GM10248 (cell line): ENCODE measurements at regions of chr11 and their contacts with region 1.

Region 1: GRCh38 chr11:92941676-92942571 is 27.5 kb upstream of the MTNR1B start:
- DNase-seq: peak; percentile 56
- CTCF ChIP-seq: peak; percentile 57

Region 2: DNA sequence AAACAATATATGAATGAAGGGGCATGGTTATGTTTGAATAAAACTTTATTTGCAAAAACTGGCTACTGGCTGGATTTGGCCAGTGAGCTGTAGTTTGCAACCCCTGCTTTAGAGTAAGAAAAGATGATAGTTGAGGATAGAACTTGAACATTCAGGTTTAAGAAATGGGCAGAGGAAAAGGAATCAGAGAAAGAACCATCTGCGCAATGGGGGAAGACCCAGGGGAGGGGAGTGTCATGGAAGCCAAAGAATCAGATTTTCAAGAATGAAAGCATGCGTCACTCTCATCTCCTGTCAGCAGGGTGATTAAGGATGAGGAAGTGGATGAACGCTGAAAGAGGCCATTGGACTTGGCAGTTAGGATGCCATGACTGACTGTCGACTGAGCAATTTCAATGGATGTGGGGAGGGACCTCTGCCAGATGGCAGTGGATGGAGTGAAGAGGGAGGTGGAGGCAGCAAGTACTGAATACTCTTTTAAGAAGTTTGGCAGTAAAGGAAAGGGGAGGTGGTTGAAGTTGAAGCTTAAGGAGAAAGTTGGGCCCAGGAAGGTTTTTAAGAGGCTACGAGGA is 696.1 kb before region 1 on chr11:
- CTCF ChIA-PET with region 1: no interaction called
- POLR2A ChIA-PET with region 1: no interaction called
- DNase-seq: no peak
- CTCF ChIP-seq: no peak

Region 3: DNA sequence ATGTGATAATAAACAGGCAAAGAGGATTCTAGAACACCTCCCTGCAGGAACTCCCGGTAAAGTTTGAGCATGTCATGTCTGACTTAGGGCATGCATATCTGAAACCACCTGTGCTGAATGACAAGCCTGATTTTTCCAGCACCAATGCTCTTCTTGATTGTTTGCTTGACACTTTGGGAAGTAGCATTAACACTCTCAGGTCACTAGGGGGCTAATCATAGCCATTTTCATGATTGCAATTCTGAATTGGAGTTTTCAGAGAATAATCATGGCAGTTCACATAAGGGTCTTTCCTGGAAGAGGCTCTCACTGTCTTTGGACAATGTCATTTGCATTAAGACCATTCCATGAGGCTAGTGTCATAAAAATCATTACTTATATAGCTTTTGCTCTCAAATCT is 206.9 kb before region 1 on chr11:
- CTCF ChIA-PET with region 1: no interaction called
- POLR2A ChIA-PET with region 1: no interaction called
- DNase-seq: no peak
- CTCF ChIP-seq: no peak

Region 4: DNA sequence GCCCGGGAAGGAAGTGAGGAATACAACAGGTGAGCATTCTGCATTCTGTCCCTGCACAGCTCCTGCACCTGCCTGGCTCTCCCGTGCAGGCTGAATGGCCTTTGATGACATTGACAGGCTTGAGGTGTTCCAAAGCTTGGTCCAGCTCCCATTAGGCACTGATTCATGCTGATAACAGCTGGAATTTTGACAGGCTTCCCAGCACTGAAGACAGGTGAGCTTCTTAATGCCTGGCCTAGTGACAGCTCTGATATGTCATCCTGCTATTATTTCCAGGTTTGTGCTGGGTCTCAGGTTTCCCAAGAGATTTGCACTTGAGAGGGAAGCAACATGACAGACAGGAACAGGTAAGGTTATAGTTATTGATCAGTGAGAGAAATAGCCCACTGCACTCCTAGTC is 30.4 kb before region 1 on chr11:
- CTCF ChIA-PET with region 1: no interaction called
- POLR2A ChIA-PET with region 1: no interaction called
- DNase-seq: no peak
- CTCF ChIP-seq: no peak

Region 5: GRCh38 chr11:92955860-92956259 is 13.9 kb after region 1 on chr11:
- CTCF ChIA-PET with region 1: interaction called, 17 read pairs
- POLR2A ChIA-PET with region 1: no interaction called
- DNase-seq: no peak
- CTCF ChIP-seq: no peak

Region 6: GRCh38 chr11:92978271-92979111 is 36.6 kb after region 1 on chr11:
- CTCF ChIA-PET with region 1: interaction called, 13 read pairs
- POLR2A ChIA-PET with region 1: no interaction called
- DNase-seq: no peak
- CTCF ChIP-seq: no peak

Region 7: DNA sequence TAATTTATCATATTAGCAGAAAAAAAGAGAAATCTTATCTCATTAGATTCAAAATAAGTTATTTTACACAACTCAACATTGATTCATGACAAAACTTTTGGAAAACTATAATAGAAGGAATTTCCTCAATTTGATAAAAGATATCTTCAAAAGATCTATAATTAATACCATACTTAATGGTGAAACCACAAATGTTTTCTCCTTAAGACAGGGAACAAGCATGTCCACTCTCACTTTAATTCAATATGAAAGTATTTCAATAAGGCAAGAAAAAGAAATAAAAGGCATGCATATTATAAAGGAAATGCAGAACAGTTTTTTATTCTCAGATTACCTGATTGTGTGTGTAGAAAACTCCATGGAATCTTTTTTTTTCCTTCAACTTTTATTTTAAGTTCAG is 51.1 kb after region 1 on chr11:
- CTCF ChIA-PET with region 1: no interaction called
- POLR2A ChIA-PET with region 1: no interaction called
- DNase-seq: no peak
- CTCF ChIP-seq: no peak

Region 8: GRCh38 chr11:93225662-93226061 is 283.7 kb after region 1 on chr11:
- CTCF ChIA-PET with region 1: interaction called, 52 read pairs
- POLR2A ChIA-PET with region 1: no interaction called
- DNase-seq: peak; percentile 17
- CTCF ChIP-seq: peak; percentile 10

Region 9: DNA sequence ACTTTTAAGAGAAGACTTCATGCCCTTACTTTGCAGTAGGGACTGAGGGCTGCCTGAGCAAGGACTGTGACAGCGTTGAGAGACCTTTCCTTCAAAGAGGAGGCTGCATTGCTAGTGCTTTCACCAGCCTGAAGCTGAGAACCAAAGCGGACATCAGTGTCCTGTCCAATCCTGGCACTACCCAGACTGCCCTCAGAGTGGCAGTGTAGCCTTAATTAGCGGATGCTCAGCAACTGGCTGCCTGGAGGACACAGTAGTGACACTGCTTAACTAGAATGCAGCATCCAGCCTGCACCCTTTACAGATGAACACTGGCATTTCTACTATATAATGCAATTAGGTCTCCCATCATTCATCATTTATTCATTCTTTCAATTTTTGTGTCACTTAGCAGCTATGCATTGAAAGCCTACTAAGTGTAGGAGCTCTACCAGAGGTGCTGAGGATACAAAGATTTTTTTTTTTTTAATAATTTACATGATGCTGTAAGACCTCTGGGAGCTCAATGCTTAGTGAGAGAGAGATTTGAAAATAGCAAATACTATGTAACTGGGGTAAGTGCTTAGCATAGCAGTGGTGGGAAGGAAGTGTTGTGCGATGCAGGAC is 292.8 kb after region 1 on chr11:
- CTCF ChIA-PET with region 1: interaction called, 52 read pairs
- POLR2A ChIA-PET with region 1: no interaction called
- DNase-seq: peak; percentile 69
- CTCF ChIP-seq: peak; percentile 98